ENCODE measurements at regions of chr10 and their contacts with region 1.

Region 1: DNA sequence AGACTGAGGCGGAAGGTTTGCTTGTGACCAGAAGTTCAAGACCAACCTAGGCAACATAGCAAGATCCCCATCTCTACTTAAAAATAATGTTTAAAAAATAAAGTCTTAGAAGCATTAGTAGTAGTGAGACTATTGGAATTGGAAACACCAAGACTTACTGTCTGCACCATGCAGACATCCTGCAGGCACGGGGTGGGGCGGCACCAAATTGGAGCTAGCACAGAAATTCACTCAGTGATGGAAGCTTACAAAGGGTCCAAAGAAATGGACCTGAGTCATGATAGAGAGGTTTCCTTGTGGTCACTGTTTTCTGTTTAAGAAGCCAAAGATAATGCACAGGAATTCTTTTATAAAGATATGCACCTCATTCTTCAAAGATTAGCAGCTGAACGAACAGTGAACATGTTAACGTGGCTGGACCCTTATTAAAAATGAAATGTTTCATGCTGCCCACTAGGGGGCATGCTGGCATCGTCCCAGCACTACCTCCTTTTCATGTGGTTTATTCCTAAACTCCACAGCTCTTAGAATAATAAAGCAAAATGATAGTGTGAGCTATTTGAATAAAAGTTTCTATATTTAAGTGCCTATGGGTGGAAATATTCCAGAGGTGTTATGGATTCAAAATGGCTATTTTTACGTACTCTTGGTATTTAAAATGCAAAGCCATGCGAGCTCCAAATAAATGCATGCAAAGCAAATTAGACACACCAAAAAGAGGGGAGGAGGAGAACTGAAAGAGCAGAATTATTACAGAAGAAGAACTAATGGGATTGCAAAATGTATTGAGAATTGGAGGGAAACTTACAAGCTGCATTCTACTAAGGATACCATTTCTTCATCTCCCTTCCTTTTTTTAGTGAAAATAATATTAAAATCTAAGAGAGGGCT is 28.6 kb downstream of the PDSS1 start:
- DNase-seq: peak; percentile 60
- H3K4me3 Mint-ChIP-seq: no peak overlapping the region
- H3K27ac Mint-ChIP-seq: no peak overlapping the region
- H3K4me1 Mint-ChIP-seq: peaks cover 10% of the 10 kb centered on the region
- H3K27me3 Mint-ChIP-seq: no peaks in the 10 kb centered on the region

Region 2: GRCh38 chr10:26334932-26335573 is 391.0 kb before region 1 on chr10:
- CTCF ChIA-PET with region 1: interaction called, 21 read pairs
- DNase-seq: peak; percentile 73
- H3K4me3 Mint-ChIP-seq: peak overlapping the region; percentile 57
- H3K27ac Mint-ChIP-seq: no peak overlapping the region
- H3K4me1 Mint-ChIP-seq: peaks cover 13% of the 10 kb centered on the region
- H3K27me3 Mint-ChIP-seq: no peaks in the 10 kb centered on the region

Region 3: DNA sequence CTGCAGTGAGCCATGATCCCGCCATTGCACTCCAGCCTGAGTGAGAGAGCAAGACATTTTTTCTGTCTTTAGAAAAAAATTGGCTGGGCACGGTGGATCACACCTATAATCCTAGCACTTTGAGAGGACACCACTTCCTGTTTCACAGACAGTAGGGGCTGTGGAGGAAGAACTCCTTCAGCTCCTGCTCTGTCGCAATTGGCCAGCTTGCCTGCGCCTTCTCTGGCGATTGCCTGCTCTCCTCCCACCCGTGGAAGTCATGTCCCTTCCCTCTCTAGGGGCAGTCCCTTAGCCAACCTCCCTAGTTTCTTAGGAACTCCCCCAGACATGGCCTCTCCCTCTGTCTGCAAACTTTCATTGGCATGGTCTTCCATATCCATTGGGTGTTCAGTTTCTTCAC is 19.9 kb before region 1 on chr10:
- CTCF ChIA-PET with region 1: interaction called, 12 read pairs
- DNase-seq: no peak
- H3K4me3 Mint-ChIP-seq: no peak overlapping the region
- H3K27ac Mint-ChIP-seq: no peak overlapping the region
- H3K4me1 Mint-ChIP-seq: peaks cover 13% of the 10 kb centered on the region
- H3K27me3 Mint-ChIP-seq: no peaks in the 10 kb centered on the region

Region 4: DNA sequence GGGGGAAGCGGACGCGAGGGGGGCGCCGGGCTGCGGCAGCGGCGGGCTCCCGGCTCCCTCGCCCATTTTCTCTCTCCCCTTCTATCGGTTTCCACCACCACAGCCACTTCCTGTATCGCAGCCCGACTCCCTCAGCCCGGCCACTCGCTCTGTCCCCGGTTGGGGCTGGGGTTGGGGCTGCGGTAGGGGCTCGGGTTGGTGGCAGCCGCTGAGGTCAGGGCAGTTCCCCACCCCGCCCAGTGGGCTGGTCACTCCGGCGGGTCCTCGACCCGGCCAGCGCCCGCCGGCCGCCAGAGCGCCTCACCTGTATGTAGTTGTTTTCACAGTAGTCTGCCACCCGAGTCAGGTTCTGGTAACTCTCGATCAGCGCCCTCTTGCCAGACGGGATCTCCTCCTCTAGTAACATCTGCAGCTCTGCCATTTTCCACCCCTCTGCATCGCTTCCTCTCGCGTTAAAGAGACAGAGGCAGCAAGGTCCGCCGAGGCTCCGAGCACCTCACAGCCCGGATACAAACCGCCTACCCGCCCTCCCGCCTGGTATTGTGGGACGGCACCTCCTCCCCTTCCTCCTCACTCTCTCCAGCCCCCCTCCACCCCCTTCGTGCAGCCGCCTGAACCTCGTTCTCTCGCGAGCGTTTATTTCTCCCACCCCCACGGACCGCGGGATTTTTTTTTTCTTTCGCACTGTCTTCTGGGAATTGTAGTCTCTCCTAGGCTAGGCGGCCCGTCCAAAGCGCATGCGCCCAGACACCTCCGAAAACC is 134.5 kb after region 1 on chr10 and contains the start of gene ABI1:
- CTCF ChIA-PET with region 1: interaction called, 26 read pairs
- DNase-seq: peak; percentile 98
- H3K4me3 Mint-ChIP-seq: peak within 1 kb of the TSS; percentile 98
- H3K27ac Mint-ChIP-seq: peak within 1 kb of the TSS; percentile 100
- H3K4me1 Mint-ChIP-seq: peaks cover 37% of the 10 kb centered on the region
- H3K27me3 Mint-ChIP-seq: peaks cover 24% of the 10 kb centered on the region

Region 5: GRCh38 chr10:26881600-26882331 is 155.7 kb after region 1 on chr10:
- CTCF ChIA-PET with region 1: interaction called, 119 read pairs
- DNase-seq: no peak
- H3K4me3 Mint-ChIP-seq: no peak overlapping the region
- H3K27ac Mint-ChIP-seq: no peak overlapping the region
- H3K4me1 Mint-ChIP-seq: peaks cover 3% of the 10 kb centered on the region
- H3K27me3 Mint-ChIP-seq: peaks cover 24% of the 10 kb centered on the region

Region 6: DNA sequence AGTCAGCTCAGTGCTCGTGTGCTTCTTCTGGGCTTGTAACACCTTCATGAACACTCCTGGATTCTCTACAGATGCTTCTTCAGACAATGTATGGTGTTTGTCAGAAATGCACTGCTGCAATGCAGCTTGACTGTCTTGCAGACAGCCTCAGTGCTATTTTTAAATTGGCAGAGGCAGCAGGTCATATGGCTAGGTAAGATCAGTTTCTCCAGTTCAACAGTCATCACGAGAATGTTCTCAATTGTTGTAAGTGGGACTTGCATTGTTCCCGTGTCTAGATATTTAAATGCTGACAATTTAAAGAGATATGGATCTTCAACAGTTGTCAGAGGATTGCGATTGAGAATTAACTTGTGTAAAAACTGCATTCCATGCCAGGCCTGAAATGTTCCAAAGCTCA is 522.1 kb after region 1 on chr10:
- CTCF ChIA-PET with region 1: no interaction called
- DNase-seq: no peak
- H3K4me3 Mint-ChIP-seq: no peak overlapping the region
- H3K27ac Mint-ChIP-seq: no peak overlapping the region
- H3K4me1 Mint-ChIP-seq: peaks cover 19% of the 10 kb centered on the region
- H3K27me3 Mint-ChIP-seq: no peaks in the 10 kb centered on the region

Region 7: GRCh38 chr10:27258838-27259812 is 533.0 kb after region 1 on chr10:
- CTCF ChIA-PET with region 1: no interaction called
- DNase-seq: peak; percentile 44
- H3K4me3 Mint-ChIP-seq: peak overlapping the region; percentile 76
- H3K27ac Mint-ChIP-seq: no peak overlapping the region
- H3K4me1 Mint-ChIP-seq: peaks cover 27% of the 10 kb centered on the region
- H3K27me3 Mint-ChIP-seq: peaks cover 56% of the 10 kb centered on the region

Measured in activated naive CD4-positive, alpha-beta T cell treated with anti-CD3 and anti-CD28 coated beads, Interleukin-2, amount 10 ng/mL, durations not matched to agents 7 days and 5 days (primary cell).